Activated naive CD4-positive, alpha-beta T cell treated with anti-CD3 and anti-CD28 coated beads for 36 hours (primary cell): ENCODE measurements at regions of chr9 and their contacts with region 1.

Region 1: DNA sequence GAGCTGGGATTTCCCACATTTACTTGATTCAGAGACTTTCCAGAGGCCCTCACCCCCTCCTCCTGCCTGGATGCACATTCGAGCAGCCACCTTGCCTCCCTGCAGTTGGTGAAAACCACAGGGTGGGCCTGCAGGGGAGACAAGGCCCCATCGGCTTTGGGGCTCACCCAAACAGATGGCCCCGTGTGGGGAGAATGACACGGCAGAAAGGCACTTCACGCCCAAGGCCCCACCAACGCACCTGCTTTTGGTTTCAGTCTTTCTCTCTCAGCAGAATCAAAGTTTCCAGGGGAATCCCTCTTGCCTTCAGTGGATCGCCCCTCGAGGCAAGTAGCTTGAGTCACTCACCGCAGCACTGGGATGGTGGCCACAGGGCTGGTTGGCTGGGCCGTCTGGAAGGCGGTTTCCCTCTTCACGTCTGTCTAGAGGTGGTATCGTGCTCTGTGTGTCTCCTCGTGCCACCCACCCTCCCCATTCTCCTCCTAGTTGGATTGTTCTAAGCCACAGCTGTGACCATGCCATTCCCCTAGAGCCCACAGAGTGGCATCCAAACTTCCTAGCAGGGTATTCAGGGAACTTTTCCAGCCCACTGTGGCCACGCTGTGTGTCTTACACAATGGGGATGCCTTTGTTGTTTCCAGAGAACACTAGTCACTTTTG is 31.8 kb downstream of the SEC61B start:
- DNase-seq: peak; percentile 96
- H3K4me3 Mint-ChIP-seq: peak overlapping the region; percentile 44
- H3K27ac Mint-ChIP-seq: peak overlapping the region; percentile 84
- H3K4me1 Mint-ChIP-seq: peaks cover 34% of the 10 kb centered on the region
- H3K27me3 Mint-ChIP-seq: peaks cover 18% of the 10 kb centered on the region

Region 2: GRCh38 chr9:98998441-98999151 is 255.3 kb before region 1 on chr9:
- CTCF ChIA-PET with region 1: no interaction called
- intact Hi-C with region 1: loop called (anchors 5 kb)
- DNase-seq: peak; percentile 69
- H3K4me3 Mint-ChIP-seq: no peak overlapping the region
- H3K27ac Mint-ChIP-seq: no peak overlapping the region
- H3K4me1 Mint-ChIP-seq: peaks cover 21% of the 10 kb centered on the region
- H3K27me3 Mint-ChIP-seq: peaks cover 4% of the 10 kb centered on the region

Region 3: GRCh38 chr9:99184475-99185347 is 69.2 kb before region 1 on chr9:
- CTCF ChIA-PET with region 1: interaction called, 6 read pairs
- intact Hi-C with region 1: loop called (anchors 1 kb)
- DNase-seq: peak; percentile 87
- H3K4me3 Mint-ChIP-seq: no peak overlapping the region
- H3K27ac Mint-ChIP-seq: peak overlapping the region; percentile 64
- H3K4me1 Mint-ChIP-seq: peaks cover 34% of the 10 kb centered on the region
- H3K27me3 Mint-ChIP-seq: peaks cover 3% of the 10 kb centered on the region

Region 4: DNA sequence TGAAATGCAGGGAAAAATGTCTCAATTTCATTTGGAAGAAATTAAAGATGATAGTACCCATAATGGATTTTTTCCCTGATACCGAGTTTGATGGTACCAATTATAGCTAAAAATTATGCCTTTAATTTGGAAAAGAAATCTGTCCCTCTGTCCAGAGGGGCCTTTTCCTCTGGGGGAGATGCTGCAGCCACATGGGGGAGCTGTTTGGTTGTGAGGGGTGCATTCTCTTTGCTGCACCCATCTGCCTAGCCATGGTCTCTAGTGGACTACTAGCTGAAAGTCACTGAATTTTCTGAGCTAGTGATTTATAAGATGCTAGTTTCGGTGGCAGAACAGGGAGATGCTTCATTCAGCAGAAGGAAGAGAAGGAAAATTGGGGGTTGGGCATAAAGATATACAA is 22.2 kb before region 1 on chr9:
- CTCF ChIA-PET with region 1: interaction called, 11 read pairs
- intact Hi-C with region 1: loop called (anchors 1 kb)
- DNase-seq: peak; percentile 69
- H3K4me3 Mint-ChIP-seq: no peak overlapping the region
- H3K27ac Mint-ChIP-seq: no peak overlapping the region
- H3K4me1 Mint-ChIP-seq: peaks cover 10% of the 10 kb centered on the region
- H3K27me3 Mint-ChIP-seq: no peaks in the 10 kb centered on the region

Region 5: DNA sequence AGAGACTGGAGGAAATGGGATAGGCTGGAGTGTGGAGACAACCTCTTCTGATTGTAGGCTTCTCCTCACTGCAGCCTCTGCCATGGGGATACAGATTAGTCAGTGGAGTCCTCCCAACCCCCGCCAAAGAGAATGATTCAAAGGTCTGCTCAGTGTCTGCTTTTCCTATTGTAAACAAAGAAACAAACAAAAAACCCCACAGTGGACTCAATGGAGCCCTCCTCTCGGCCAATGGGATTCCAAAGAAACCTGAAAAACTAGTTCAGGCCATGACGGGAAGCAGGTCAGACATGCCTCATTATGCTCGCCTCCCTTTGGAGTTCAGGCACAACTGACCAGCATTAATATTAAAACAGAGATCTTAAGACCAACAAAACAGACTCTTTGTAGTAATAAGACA is 53.9 kb after region 1 on chr9:
- CTCF ChIA-PET with region 1: no interaction called
- intact Hi-C with region 1: no loop called
- DNase-seq: no peak
- H3K4me3 Mint-ChIP-seq: no peak overlapping the region
- H3K27ac Mint-ChIP-seq: no peak overlapping the region
- H3K4me1 Mint-ChIP-seq: no peaks in the 10 kb centered on the region
- H3K27me3 Mint-ChIP-seq: no peaks in the 10 kb centered on the region

Region 6: GRCh38 chr9:99377790-99378775 is 124.2 kb after region 1 on chr9:
- CTCF ChIA-PET with region 1: no interaction called
- intact Hi-C with region 1: no loop called
- DNase-seq: no peak
- H3K4me3 Mint-ChIP-seq: no peak overlapping the region
- H3K27ac Mint-ChIP-seq: no peak overlapping the region
- H3K4me1 Mint-ChIP-seq: no peaks in the 10 kb centered on the region
- H3K27me3 Mint-ChIP-seq: peaks cover 12% of the 10 kb centered on the region

Region 7: DNA sequence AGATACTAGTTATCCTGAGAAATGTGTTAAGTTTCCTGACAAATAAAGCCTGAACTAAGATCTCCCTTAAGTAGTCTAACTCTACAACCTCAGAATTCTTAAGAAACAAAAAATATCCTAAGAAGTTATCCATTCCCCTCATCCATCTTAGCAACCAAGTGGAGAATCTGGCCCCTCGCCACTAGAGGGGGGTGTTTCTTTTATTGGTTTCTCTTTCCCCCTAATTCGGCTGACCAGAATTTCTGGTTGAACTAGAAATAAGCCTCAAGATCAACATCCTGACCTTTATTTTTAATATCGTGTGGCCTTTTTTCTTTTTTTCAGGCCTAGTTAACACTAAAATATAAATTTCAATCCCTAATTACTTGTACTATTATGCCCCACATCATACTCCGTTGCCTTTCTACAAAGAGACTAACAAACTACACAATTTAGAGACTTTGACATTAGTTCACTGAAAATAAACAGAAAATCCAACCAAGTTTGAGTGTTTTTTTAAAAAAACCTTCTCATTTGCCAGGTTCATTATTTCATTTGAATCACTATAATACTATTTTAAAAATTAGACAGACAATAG is 553.5 kb after region 1 on chr9:
- CTCF ChIA-PET with region 1: no interaction called
- intact Hi-C with region 1: loop called (anchors 1 kb)
- DNase-seq: peak; percentile 79
- H3K4me3 Mint-ChIP-seq: no peak overlapping the region
- H3K27ac Mint-ChIP-seq: no peak overlapping the region
- H3K4me1 Mint-ChIP-seq: peaks cover 21% of the 10 kb centered on the region
- H3K27me3 Mint-ChIP-seq: no peaks in the 10 kb centered on the region

Region 8: GRCh38 chr9:99954819-99955218 is 700.9 kb after region 1 on chr9:
- CTCF ChIA-PET with region 1: no interaction called
- intact Hi-C with region 1: loop called (anchors 5 kb)
- DNase-seq: no peak
- H3K4me3 Mint-ChIP-seq: no peak overlapping the region
- H3K27ac Mint-ChIP-seq: peak overlapping the region; percentile 50
- H3K4me1 Mint-ChIP-seq: peaks cover 23% of the 10 kb centered on the region
- H3K27me3 Mint-ChIP-seq: no peaks in the 10 kb centered on the region